ENCODE measurements at regions of chr17 and their contacts with region 1.

Region 1: DNA sequence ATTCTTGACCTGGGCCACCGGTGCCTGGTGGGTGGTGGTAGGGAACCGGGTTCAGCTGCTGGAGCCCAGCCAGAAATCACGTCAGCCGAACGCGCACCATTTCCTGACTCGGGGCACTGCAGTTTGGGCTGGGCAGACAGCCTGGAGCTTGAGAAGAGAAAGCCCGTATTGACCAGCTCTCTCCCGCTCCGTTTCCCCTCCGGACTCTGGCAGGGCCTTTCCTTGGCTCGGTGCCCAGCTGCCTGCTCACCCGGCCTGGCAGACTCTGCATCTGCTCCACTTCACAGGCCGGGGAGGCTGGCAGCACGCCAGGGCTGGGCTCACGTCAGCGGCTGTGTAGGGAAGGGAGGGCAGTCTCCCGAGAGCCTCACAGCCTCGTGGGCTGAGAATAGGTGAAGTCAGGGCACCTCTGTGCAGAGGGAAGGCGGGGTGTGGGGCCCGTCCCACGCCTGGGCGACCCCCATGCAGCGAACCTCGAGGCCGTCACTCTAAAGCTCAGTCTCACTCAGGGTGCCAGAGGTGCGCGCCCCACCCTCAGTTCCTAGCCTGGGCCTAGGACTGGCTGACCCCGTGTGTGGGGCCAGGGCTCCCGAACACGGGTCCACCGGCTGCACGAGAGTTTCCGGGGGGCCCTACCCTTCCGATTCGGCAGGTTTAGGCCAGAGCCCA is 59.1 kb downstream of the OR1D5 start:
- H3K4me3 ChIP-seq: peak overlapping the region; percentile 10
- H3K27ac ChIP-seq: peak overlapping the region; percentile 83
- H3K4me1 ChIP-seq: peaks cover 11% of the 10 kb centered on the region
- CTCF ChIP-seq: no peak

Region 2: GRCh38 chr17:2975469-2975958 is 28.8 kb before region 1 on chr17:
- CTCF ChIA-PET with region 1: no interaction called
- POLR2A ChIA-PET with region 1: interaction called, 11 read pairs
- H3K4me3 ChIP-seq: peak overlapping the region; percentile 45
- H3K27ac ChIP-seq: peak overlapping the region; percentile 24; the same call in 1 of the 2 replicates
- H3K4me1 ChIP-seq: peaks cover 6% of the 10 kb centered on the region; the same call in 1 of the 2 replicates
- CTCF ChIP-seq: no peak

Measured in HEK293 (cell line).